ENCODE measurements at regions of chr1 and their contacts with region 1.

Region 1: GRCh38 chr1:180981596-180982387 is 40.9 kb downstream of the STX6 start:
- DNase-seq: peak in 8 of 9 donors; percentile 32 to 62 (median 55)
- ATAC-seq: peak; percentile 85
- H3K4me3 ChIP-seq: no peak overlapping the region
- H3K4me3 Mint-ChIP-seq: peak overlapping the region in 9 of 10 donors; percentile 15 to 79 (median 34)
- H3K27ac ChIP-seq: peak overlapping the region; percentile 34
- H3K27ac Mint-ChIP-seq: peak overlapping the region; percentile 22 to 78 (median 65)
- H3K4me1 ChIP-seq: peaks cover 5 to 11% of the 10 kb centered on the region in 2 donors
- H3K4me1 Mint-ChIP-seq: peaks cover 12 to 45% (median 30%) of the 10 kb centered on the region in 7 donors
- H3K27me3 ChIP-seq: no peaks in the 10 kb centered on the region
- H3K27me3 Mint-ChIP-seq: no peaks in the 10 kb centered on the region

Region 2: GRCh38 chr1:180893614-180894013 is 88.2 kb before region 1 on chr1:
- CTCF ChIA-PET with region 1: no interaction called
- POLR2A ChIA-PET with region 1: no interaction called
- intact Hi-C with region 1: loop called (anchors 5 to 10 kb)
- DNase-seq: no peak
- ATAC-seq: no peak
- H3K4me3 ChIP-seq: no peak overlapping the region
- H3K4me3 Mint-ChIP-seq: no peak overlapping the region
- H3K27ac ChIP-seq: no peak overlapping the region
- H3K27ac Mint-ChIP-seq: peak overlapping the region in 3 of 9 donors; percentile 45 to 83 (median 51)
- H3K4me1 ChIP-seq: no peaks in the 10 kb centered on the region
- H3K4me1 Mint-ChIP-seq: peaks cover 4 to 14% (median 11%) of the 10 kb centered on the region in 7 donors
- H3K27me3 ChIP-seq: no peaks in the 10 kb centered on the region
- H3K27me3 Mint-ChIP-seq: no peaks in the 10 kb centered on the region

Region 3: DNA sequence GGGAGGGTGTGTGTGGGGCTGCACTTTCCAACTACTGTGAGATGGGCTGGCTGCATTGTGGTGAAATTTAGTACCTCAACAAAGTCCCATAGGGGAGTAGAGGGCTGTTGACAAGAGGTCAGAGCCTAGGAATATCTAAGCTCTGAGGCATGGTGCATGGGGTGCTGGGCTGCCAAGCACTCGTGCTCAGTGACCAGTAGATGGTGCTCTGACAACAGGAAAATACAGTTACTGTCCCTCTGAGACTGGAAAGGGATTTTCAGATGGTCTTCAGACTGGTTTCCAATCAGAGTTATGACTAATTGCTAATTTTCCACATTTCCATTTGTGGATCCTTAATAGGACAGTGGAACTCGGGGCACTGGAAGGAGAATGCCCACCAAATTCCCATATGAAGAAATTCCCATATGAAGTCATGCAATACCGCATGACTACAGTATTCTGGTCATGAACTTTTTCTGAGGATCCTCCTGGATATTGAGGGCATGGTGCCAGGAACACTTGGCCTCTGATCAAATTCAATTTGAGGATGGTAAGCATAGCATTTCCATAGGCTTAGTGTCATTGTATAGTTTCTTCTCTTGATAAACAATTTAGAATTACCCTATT is 497.4 kb after region 1 on chr1:
- CTCF ChIA-PET with region 1: no interaction called
- POLR2A ChIA-PET with region 1: no interaction called
- intact Hi-C with region 1: no loop called
- DNase-seq: peak in 5 of 9 donors; percentile 25 to 40 (median 26)
- ATAC-seq: peak; percentile 64
- H3K4me3 ChIP-seq: no peak overlapping the region
- H3K4me3 Mint-ChIP-seq: no peak overlapping the region
- H3K27ac ChIP-seq: no peak overlapping the region
- H3K27ac Mint-ChIP-seq: no peak overlapping the region
- H3K4me1 ChIP-seq: no peaks in the 10 kb centered on the region
- H3K4me1 Mint-ChIP-seq: peaks cover 9 to 16% (median 12%) of the 10 kb centered on the region in 7 donors
- H3K27me3 ChIP-seq: peaks cover 0 to 5% of the 10 kb centered on the region in 2 donors
- H3K27me3 Mint-ChIP-seq: peaks cover 34 to 58% (median 46%) of the 10 kb centered on the region in 5 donors